ENCODE measurements at regions of chr11 and their contacts with region 1.

Region 1: DNA sequence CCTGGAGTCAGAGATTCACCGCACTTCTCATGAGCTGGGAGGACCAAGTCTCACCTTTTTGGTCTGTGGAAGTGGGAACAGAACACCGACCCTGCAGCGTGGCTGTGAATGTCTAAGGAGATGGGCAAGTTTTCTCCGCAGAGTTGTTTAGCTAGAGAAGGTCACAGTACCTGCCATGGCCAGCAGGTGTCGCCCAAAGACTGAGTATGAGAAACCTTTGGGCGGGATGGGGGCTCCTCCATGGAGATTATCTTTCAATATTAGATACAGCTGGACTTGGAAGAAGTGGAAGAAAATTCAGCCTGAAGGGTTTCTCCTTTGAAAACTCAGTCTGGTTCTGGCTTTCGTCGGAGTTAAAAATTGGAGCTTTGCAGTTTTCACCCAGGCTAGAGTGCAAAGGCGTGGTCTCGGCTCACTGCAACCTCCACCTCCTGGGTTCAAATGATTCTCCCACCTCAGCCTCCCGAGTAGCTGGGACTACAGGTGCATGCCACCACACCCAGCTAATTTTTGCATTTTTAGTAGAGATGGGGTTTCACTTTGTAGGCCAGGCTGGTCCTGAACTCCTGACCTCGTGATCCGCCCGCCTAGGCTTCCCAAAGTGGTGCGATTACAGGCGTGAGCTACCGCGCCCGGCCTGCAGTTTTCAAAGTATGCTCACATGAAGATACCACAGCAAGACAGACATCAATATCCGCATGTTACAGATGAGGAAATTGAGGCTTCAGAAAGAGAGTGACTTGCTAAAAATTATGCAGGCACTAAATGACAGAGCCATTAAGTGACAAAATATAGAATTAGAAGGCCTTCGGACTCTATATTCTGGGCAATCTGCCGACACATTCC is 10.7 kb upstream of the DSCAML1 start:
- DNase-seq: peak in 1 of 2 experiments; percentile 92
- H3K4me3 ChIP-seq: no peak overlapping the region
- H3K27ac ChIP-seq: no peak overlapping the region
- H3K4me1 ChIP-seq: no peaks in the 10 kb centered on the region; a peak in 1 of 7 replicates
- H3K27me3 ChIP-seq: no peaks in the 10 kb centered on the region; a peak in 1 of 7 replicates
- CTCF ChIP-seq: peak; percentile 69 to 83 (median 76)
- EP300 ChIP-seq: no peak
- POLR2A ChIP-seq: no peak
- RAD21 ChIP-seq: peak; percentile 89 to 91

Region 2: DNA sequence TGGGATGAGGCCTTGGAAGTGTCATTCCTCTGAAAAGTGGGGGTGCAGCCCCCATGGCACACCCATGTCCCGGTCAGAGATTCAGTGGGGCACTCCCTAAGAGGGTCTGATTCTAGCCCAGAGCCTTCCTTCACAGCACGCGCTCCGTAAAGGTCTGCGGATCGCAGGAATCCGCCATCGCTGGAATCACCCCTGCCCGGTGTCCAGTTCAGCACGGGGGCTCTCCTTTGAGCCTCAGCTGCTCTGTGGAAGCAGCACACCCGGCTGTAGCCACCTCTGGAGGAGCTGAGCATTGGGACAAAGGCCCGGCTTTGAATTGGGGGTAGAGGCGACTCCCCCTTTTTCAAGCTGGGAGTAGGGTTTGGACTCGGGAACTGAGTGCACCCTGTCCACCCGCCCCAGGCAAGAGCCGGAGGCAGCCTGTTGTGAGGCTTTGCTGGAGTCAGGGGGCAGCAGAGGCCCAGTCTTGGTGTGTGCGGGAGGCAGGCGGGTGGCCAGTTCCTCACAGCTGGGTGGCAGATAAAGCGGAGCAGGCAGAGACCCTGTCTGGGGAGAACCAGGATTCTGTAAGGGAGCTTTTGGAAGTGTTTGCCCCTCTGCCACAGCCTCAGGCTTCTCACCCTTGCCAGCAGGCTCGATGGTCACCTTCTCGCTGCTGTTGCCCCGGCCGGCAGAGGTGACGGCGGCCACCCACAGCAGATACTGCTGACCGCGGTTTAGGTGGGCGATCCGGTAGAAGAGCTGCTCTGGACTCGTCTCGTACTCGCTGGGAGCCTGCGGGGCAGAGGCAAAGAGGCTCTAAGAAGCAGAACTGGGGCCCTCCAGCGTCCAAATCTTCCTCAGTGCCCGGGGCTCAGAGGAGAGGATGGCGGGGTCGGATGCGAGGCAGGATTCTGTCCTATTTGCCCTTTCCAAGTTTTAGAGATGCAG is 364.2 kb before region 1 on chr11:
- CTCF ChIA-PET with region 1: interaction called, 25 read pairs
- POLR2A ChIA-PET with region 1: no interaction called
- DNase-seq: peak; percentile 27 to 77
- H3K4me3 ChIP-seq: no peak overlapping the region
- H3K27ac ChIP-seq: no peak overlapping the region
- H3K4me1 ChIP-seq: peaks cover 0 to 8% (median 1%) of the 10 kb centered on the region in 4 experiments; a peak in 3 of 7 replicates
- H3K27me3 ChIP-seq: peaks cover 0 to 6% (median 0%) of the 10 kb centered on the region in 4 experiments; a peak in 4 of 7 replicates
- CTCF ChIP-seq: peak; percentile 86 to 92 (median 91)
- EP300 ChIP-seq: no peak
- POLR2A ChIP-seq: no peak
- RAD21 ChIP-seq: peak; percentile 95 to 98

Region 3: DNA sequence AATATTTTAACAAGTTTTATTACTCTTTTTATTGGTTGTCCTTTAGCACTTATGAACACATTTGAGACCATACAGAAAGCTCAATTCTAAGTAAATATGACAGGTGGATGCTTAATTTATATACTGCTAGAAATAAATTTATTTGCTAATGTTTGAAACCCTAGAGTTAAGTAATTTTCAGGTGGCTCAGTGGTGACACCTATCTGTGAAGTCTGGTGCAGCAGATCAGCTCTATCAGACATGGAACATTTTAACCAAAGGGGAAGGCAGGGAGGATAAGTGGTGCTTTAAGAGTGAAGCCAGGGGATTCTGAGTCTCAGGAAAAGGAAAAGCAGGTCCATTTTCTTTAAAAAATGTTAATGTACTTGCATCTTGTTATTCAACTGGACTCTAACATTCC is 186.5 kb before region 1 on chr11:
- CTCF ChIA-PET with region 1: interaction called, 58 read pairs
- POLR2A ChIA-PET with region 1: no interaction called
- DNase-seq: no peak
- H3K4me3 ChIP-seq: no peak overlapping the region
- H3K27ac ChIP-seq: no peak overlapping the region
- H3K4me1 ChIP-seq: peaks cover 0 to 4% (median 2%) of the 10 kb centered on the region in 4 experiments; a peak in 4 of 7 replicates
- H3K27me3 ChIP-seq: no peaks in the 10 kb centered on the region
- CTCF ChIP-seq: peak; percentile 3 to 59 (median 41)
- EP300 ChIP-seq: no peak
- POLR2A ChIP-seq: no peak
- RAD21 ChIP-seq: peak; percentile 31 to 52; a peak in 3 of 4 replicates

Region 4: GRCh38 chr11:117717485-117718314 is 90.0 kb before region 1 on chr11:
- CTCF ChIA-PET with region 1: interaction called, 12 read pairs
- POLR2A ChIA-PET with region 1: no interaction called
- DNase-seq: peak in 1 of 2 experiments; percentile 66
- H3K4me3 ChIP-seq: peak overlapping the region in 1 of 4 experiments; percentile 36; a peak in 1 of 8 replicates
- H3K27ac ChIP-seq: no peak overlapping the region
- H3K4me1 ChIP-seq: peaks cover 8 to 20% (median 13%) of the 10 kb centered on the region in 4 experiments
- H3K27me3 ChIP-seq: peaks cover 0 to 5% (median 2%) of the 10 kb centered on the region in 4 experiments; a peak in 3 of 7 replicates
- CTCF ChIP-seq: no peak
- EP300 ChIP-seq: no peak; a peak in 1 of 3 replicates
- POLR2A ChIP-seq: no peak
- RAD21 ChIP-seq: no peak; a peak in 1 of 4 replicates

Region 5: DNA sequence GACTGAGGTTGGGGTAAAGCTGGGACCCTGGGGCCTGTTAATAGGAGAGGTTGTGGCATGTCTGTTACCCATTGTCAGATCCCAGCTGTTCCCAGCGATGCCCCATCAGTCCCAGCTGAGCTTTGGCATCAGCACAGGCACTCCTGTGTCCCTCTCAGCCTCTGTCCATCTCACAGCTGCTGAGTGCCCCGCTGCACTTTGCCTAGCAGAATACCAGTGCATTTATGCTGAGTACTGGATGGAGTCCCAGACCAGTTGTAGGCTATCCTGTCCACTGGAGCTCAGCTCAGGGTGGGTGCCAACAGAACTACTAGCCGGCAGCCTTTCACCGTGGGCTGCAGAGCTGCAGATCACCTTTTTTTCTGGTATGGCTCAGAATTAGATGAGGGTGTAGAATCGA is 58.8 kb after region 1 on chr11:
- CTCF ChIA-PET with region 1: no interaction called
- POLR2A ChIA-PET with region 1: no interaction called
- DNase-seq: peak in 1 of 2 experiments; percentile 30
- H3K4me3 ChIP-seq: no peak overlapping the region
- H3K27ac ChIP-seq: no peak overlapping the region
- H3K4me1 ChIP-seq: peaks cover 7 to 28% (median 21%) of the 10 kb centered on the region in 4 experiments
- H3K27me3 ChIP-seq: no peaks in the 10 kb centered on the region
- CTCF ChIP-seq: no peak
- EP300 ChIP-seq: no peak
- POLR2A ChIP-seq: no peak
- RAD21 ChIP-seq: no peak

Region 6: DNA sequence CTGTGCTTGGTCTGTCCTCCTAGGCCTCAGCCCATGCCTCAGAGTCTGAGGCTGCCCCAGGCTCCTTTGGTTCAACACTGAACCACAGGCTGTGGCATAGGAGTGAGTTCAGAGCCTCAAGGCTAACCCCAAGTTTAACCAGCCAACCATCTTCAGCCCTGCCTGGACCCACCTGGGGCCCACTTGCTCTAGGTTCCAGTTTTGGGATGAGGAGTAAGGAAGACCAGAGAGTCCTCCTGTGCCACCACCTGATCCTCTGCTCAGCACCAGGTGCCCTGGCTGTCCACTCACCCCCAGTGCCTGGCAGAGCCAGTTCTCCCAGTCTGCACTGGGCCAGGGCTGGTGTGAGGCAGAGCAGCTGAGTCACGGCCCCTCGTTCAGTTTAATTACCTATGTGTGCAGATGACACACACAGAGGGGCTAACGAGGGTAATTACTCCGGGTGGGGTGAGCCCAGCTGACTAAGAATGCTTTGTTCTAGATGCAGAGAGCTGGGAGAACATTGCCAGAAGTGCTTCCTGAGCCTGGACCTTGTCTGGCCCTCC is 133.5 kb after region 1 on chr11:
- CTCF ChIA-PET with region 1: interaction called, 45 read pairs
- POLR2A ChIA-PET with region 1: no interaction called
- DNase-seq: no peak
- H3K4me3 ChIP-seq: no peak overlapping the region
- H3K27ac ChIP-seq: no peak overlapping the region
- H3K4me1 ChIP-seq: no peaks in the 10 kb centered on the region
- H3K27me3 ChIP-seq: no peaks in the 10 kb centered on the region; a peak in 1 of 7 replicates
- CTCF ChIP-seq: no peak
- EP300 ChIP-seq: no peak
- POLR2A ChIP-seq: no peak
- RAD21 ChIP-seq: no peak

Region 7: DNA sequence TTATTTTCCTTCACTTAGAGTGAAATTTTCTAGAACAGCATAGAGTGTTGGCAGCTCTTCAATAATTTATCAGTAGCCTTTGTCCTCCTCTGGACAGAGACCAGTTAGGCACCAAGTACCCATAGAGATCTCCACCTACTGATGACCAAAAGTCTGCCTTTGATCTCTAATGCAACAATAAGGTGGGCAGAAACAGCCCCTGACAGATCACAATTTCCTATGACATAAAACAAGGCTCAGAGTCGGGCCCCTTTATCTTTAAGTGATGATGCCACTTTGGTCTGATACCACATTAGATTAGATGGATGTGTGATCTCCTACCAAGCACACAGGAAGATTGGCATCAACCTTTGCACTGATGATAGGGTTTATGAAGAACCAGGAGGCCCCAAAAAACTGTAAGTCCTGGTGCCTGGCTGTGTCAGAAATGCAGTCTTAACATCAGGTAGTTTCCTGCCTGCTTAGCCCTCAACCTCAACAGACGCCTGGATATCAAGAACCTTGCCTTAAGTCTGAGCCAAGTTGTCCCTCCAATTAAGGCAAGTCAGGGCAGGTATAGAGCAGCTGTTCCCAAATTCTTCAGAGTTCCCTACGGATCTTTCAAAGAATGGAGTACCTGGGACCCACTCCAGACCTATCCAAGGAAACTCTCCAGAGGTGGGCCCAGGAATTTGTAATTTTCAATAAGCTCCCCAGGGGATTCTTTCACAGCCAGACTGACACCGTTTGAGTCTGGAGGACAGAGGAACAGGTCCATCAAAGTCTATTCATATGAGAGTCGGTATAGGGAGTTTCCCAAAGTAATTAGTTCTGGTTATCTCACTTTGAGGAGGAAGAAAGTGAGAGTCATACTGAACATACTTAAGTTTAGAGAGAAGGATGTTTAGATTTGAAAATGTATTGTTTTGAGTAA is 238.6 kb after region 1 on chr11:
- CTCF ChIA-PET with region 1: interaction called, 45 read pairs
- POLR2A ChIA-PET with region 1: no interaction called
- DNase-seq: no peak
- H3K4me3 ChIP-seq: no peak overlapping the region
- H3K27ac ChIP-seq: no peak overlapping the region
- H3K4me1 ChIP-seq: no peaks in the 10 kb centered on the region
- H3K27me3 ChIP-seq: no peaks in the 10 kb centered on the region
- CTCF ChIP-seq: no peak
- EP300 ChIP-seq: no peak
- POLR2A ChIP-seq: no peak
- RAD21 ChIP-seq: no peak